ENCODE measurements at regions of chr12 and their contacts with region 1.

Region 1: GRCh38 chr12:91811481-91812287 is 334.0 kb downstream of the BTG1 start:
- DNase-seq: peak; percentile 40
- ATAC-seq: peak; percentile 95
- H3K4me3 ChIP-seq: no peak overlapping the region
- H3K27ac ChIP-seq: no peak overlapping the region
- H3K4me1 ChIP-seq: no peaks in the 10 kb centered on the region
- H3K27me3 ChIP-seq: no peaks in the 10 kb centered on the region
- CTCF ChIP-seq: peak; percentile 68 to 86 (median 79)
- EP300 ChIP-seq: no peak
- POLR2A ChIP-seq: no peak
- RAD21 ChIP-seq: peak; percentile 87

Region 2: GRCh38 chr12:91778938-91779400 is 32.7 kb before region 1 on chr12:
- CTCF ChIA-PET with region 1: interaction called, 59 read pairs
- POLR2A ChIA-PET with region 1: no interaction called
- RAD21 ChIA-PET with region 1: interaction called, 10 read pairs
- SMC1A ChIA-PET with region 1: interaction called, 14 read pairs
- in situ Hi-C with region 1: no loop called
- intact Hi-C with region 1: no loop called
- DNase-seq: peak; percentile 93
- ATAC-seq: peak; percentile 99
- H3K4me3 ChIP-seq: peak overlapping the region; percentile 34; the same call in 1 of the 2 replicates
- H3K27ac ChIP-seq: peak overlapping the region; percentile 65
- H3K4me1 ChIP-seq: peaks cover 7% of the 10 kb centered on the region
- H3K27me3 ChIP-seq: no peaks in the 10 kb centered on the region
- CTCF ChIP-seq: no peak
- EP300 ChIP-seq: peak; percentile 29 to 80; a peak in 1 of 4 replicates
- POLR2A ChIP-seq: no peak
- RAD21 ChIP-seq: no peak

Region 3: DNA sequence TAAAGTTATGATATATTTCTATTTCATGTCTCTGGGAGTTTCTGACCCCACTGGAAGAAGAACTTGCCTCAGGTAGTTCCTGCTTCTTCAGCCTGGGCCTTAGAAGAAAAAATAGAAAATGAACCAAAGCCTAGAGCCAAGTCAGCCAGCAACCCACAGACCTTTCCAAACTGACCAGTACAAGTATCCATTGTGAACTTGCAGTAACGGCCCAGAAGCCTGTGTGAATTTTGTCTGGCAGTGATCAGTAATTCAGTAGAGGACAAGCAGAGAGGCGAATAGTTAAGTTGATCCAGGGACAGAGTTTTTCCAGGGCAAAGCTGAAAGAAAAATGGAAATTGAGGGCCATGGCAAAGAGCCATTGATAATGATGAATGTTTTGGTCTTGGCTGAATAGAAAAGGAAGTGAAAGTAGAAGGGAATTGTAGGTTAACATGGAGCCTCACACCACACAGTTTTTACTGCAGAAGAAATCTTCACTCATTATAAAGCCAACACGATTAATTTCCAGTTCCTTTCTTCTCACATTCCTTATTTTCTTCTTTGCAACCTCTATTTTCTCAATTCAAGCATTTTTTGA is 22.2 kb after region 1 on chr12:
- CTCF ChIA-PET with region 1: interaction called, 23 read pairs
- POLR2A ChIA-PET with region 1: no interaction called
- RAD21 ChIA-PET with region 1: interaction called, 4 read pairs
- SMC1A ChIA-PET with region 1: interaction called, 15 read pairs
- in situ Hi-C with region 1: no loop called
- intact Hi-C with region 1: no loop called
- DNase-seq: no peak
- ATAC-seq: peak; percentile 63; the same call in 1 of the 3 replicates
- H3K4me3 ChIP-seq: no peak overlapping the region
- H3K27ac ChIP-seq: no peak overlapping the region
- H3K4me1 ChIP-seq: no peaks in the 10 kb centered on the region
- H3K27me3 ChIP-seq: no peaks in the 10 kb centered on the region
- CTCF ChIP-seq: no peak
- EP300 ChIP-seq: no peak
- POLR2A ChIP-seq: no peak
- RAD21 ChIP-seq: no peak

Region 4: DNA sequence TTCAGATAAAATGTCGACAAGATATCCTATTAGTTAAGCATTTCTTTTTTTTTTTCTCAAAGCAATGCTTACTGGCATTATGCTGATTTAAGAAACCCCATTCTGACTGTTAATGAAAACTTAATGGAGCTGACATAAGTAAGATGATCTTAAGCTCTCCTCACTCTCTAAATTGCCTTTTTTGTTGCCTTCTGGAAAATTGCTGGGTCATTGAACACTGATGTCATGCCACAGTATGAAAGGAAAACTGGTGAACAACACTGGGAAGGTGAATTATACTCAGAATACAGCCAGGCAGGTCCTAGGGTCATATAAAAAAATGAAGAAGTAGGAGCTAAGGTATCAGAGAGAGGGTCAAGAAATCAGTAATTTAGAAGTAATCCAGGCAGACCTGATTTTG is 154.1 kb after region 1 on chr12:
- CTCF ChIA-PET with region 1: interaction called, 16 read pairs
- POLR2A ChIA-PET with region 1: no interaction called
- RAD21 ChIA-PET with region 1: interaction called, 3 read pairs
- SMC1A ChIA-PET with region 1: interaction called, 6 read pairs
- in situ Hi-C with region 1: no loop called
- intact Hi-C with region 1: no loop called
- DNase-seq: no peak
- ATAC-seq: no peak
- H3K4me3 ChIP-seq: no peak overlapping the region
- H3K27ac ChIP-seq: no peak overlapping the region
- H3K4me1 ChIP-seq: no peaks in the 10 kb centered on the region
- H3K27me3 ChIP-seq: no peaks in the 10 kb centered on the region
- CTCF ChIP-seq: no peak
- EP300 ChIP-seq: no peak
- POLR2A ChIP-seq: no peak
- RAD21 ChIP-seq: no peak

Region 5: DNA sequence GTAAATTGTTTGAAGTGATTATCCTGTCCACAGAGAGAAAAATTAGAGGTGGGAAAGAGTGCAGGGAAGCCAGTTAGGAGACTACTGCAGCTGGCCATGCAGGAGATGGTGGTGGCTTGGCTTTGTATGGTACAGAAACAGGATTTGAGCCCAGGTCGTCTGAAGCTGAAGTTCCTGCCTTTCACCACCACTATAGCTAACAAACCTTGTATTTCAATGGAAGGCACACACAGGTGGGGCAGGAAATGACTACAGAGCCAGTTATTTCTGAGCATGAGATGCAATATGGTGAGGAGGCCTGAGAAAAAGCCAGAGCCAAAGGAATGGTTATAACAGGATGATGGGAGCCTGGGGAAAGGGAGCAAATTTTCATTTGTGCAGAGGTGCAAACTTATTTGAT is 230.1 kb after region 1 on chr12:
- CTCF ChIA-PET with region 1: interaction called, 12 read pairs
- POLR2A ChIA-PET with region 1: no interaction called
- RAD21 ChIA-PET with region 1: interaction called, 4 read pairs
- SMC1A ChIA-PET with region 1: interaction called, 8 read pairs
- in situ Hi-C with region 1: no loop called
- intact Hi-C with region 1: no loop called
- DNase-seq: no peak
- ATAC-seq: peak; percentile 27
- H3K4me3 ChIP-seq: no peak overlapping the region
- H3K27ac ChIP-seq: no peak overlapping the region
- H3K4me1 ChIP-seq: peaks cover 10% of the 10 kb centered on the region
- H3K27me3 ChIP-seq: no peaks in the 10 kb centered on the region
- CTCF ChIP-seq: no peak
- EP300 ChIP-seq: no peak
- POLR2A ChIP-seq: no peak
- RAD21 ChIP-seq: no peak

Region 6: GRCh38 chr12:92324849-92325500 is 513.3 kb after region 1 on chr12:
- CTCF ChIA-PET with region 1: no interaction called
- POLR2A ChIA-PET with region 1: no interaction called
- RAD21 ChIA-PET with region 1: no interaction called
- SMC1A ChIA-PET with region 1: no interaction called
- in situ Hi-C with region 1: no loop called
- intact Hi-C with region 1: no loop called
- DNase-seq: no peak
- ATAC-seq: no peak
- H3K4me3 ChIP-seq: no peak overlapping the region
- H3K27ac ChIP-seq: no peak overlapping the region
- H3K4me1 ChIP-seq: no peaks in the 10 kb centered on the region
- H3K27me3 ChIP-seq: no peaks in the 10 kb centered on the region
- CTCF ChIP-seq: no peak
- EP300 ChIP-seq: no peak
- POLR2A ChIP-seq: no peak
- RAD21 ChIP-seq: no peak

Measured in GM12878 (cell line).